Heart right ventricle (tissue), 16 donors: ENCODE measurements at regions of chr4 and their contacts with region 1.

Region 1: DNA sequence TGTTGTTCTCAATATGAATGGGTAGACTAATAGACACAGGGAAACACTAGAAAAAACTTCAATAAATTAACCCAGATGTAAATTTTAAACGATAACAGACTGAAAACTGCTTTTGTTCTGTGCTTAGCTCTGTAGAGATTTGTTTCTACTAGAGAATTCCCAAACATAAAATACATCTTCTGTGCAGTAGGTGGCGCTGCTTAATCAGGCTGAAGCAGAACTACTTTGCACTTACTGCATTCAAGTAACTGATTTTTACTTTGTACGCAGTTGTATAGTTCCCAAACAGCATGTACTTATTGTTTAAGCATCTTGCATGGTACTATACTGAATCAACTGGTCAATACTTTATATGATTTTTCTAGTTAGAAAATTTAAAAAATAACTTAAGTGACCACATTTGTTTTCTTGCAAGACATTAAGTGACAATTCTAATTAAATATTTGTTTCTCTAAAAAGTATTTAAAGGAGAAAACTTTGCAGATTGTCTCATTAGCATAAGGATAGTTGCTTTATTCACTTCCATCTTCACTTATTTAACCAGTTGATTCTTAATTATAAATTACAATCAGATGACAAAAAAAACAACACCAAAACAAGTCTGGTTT is 490.6 kb downstream of the IL15 start:
- DNase-seq: peak in 1 of 2 donors; percentile 70
- ATAC-seq: peak in 6 of 8 donors; percentile 48 to 68 (median 66)
- H3K4me3 ChIP-seq: no peak overlapping the region
- H3K27ac ChIP-seq: no peak overlapping the region
- H3K4me1 ChIP-seq: peaks cover 4 to 41% (median 14%) of the 10 kb centered on the region in 9 donors
- H3K27me3 ChIP-seq: no peaks in the 10 kb centered on the region
- CTCF ChIP-seq: peak; percentile 72 to 94 (median 86)

Region 2: GRCh38 chr4:142353149-142353738 is 226.2 kb after region 1 on chr4:
- intact Hi-C with region 1: loop called in 2 of 10 experiments (anchors 5 to 10 kb)
- DNase-seq: peak in 1 of 2 donors; percentile 26
- ATAC-seq: peak in 7 of 8 donors; percentile 36 to 69 (median 48)
- H3K4me3 ChIP-seq: no peak overlapping the region
- H3K27ac ChIP-seq: peak overlapping the region in 6 of 10 donors; percentile 21 to 68 (median 34)
- H3K4me1 ChIP-seq: peaks cover 2 to 80% (median 67%) of the 10 kb centered on the region in 9 donors
- H3K27me3 ChIP-seq: no peaks in the 10 kb centered on the region
- CTCF ChIP-seq: peak; percentile 84 to 96 (median 90)

Region 3: GRCh38 chr4:142405021-142405694 is 278.2 kb after region 1 on chr4:
- intact Hi-C with region 1: loop called in 1 of 10 experiments (anchors 10 kb)
- DNase-seq: peak; percentile 12 to 67
- ATAC-seq: peak; percentile 62 to 83 (median 76)
- H3K4me3 ChIP-seq: peak overlapping the region; percentile 13 to 65 (median 52)
- H3K27ac ChIP-seq: peak overlapping the region in 9 of 10 donors; percentile 51 to 85 (median 71)
- H3K4me1 ChIP-seq: peaks cover 0 to 57% (median 48%) of the 10 kb centered on the region in 9 donors
- H3K27me3 ChIP-seq: no peaks in the 10 kb centered on the region
- CTCF ChIP-seq: no peak

Region 4: DNA sequence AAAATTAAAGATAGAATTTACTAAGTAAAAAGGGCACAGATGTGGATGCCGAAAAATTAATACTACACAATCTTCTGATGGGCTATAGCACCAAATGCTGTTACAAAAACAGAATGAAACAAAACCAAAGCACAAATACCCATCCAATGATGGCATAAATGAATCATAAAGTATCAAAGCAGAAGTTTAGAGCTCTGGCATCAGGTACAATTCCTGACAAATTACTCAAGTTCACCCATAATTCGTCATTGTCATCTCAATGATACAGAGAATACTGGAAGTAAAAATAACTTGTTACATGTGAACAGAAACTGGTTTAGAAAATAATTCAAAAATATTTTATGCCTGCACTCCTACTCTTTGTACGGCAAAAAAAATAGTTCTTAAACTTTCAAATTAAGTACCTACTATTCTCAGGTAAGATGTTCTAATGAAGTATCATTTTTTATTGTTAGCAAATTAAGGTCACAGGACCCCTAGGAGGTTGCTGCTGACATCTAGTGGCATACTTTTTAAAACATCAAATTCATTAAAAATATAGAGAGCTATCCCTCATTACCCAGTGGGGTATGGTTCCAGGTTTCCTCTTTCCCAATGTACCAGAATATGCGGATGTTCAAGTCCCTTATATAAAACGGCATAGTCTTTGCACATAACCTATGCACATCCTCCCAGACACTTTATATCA is 593.0 kb after region 1 on chr4:
- intact Hi-C with region 1: loop called in 7 of 10 experiments (anchors 2 to 10 kb)
- DNase-seq: no peak
- ATAC-seq: no peak
- H3K4me3 ChIP-seq: no peak overlapping the region
- H3K27ac ChIP-seq: no peak overlapping the region
- H3K4me1 ChIP-seq: peaks cover 0 to 8% (median 0%) of the 10 kb centered on the region in 9 donors
- H3K27me3 ChIP-seq: no peaks in the 10 kb centered on the region
- CTCF ChIP-seq: peak; percentile 25 to 66 (median 55)

Region 5: GRCh38 chr4:142728233-142728632 is 601.2 kb after region 1 on chr4:
- intact Hi-C with region 1: loop called in 5 of 10 experiments (anchors 5 to 10 kb)
- DNase-seq: no peak
- ATAC-seq: no peak
- H3K4me3 ChIP-seq: no peak overlapping the region
- H3K27ac ChIP-seq: no peak overlapping the region
- H3K4me1 ChIP-seq: no peaks in the 10 kb centered on the region
- H3K27me3 ChIP-seq: no peaks in the 10 kb centered on the region
- CTCF ChIP-seq: no peak

Region 6: DNA sequence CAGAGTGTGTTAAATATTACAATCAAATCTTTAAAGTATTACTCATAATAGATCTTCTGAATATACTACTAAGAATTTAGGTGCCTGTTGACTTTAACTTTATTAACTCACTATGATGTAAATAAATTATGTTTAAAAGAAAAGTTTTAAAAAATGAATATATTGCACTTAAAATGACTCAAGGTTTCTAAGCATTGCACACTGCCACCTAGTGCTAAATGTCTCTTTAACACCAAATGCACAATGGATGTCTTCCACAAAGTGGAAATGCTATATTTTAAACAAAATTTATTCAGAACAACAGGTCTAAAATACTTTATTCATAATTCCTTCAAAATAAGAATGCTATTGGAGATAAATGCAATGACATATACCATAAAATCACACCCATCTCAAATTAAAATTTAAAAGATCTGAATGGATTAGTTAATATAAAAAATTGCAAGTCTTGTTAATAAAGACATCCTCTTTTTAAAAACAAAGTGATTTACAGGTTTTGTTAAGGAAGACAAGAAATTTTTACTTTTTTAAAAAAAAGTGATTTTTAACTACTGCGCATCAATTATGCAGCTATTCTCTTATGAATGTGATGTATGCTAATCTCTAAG is 713.6 kb after region 1 on chr4:
- intact Hi-C with region 1: loop called in 8 of 10 experiments (anchors 2 to 5 kb)
- DNase-seq: no peak
- ATAC-seq: no peak
- H3K4me3 ChIP-seq: no peak overlapping the region
- H3K27ac ChIP-seq: no peak overlapping the region
- H3K4me1 ChIP-seq: peaks cover 0 to 24% (median 0%) of the 10 kb centered on the region in 9 donors
- H3K27me3 ChIP-seq: peaks cover 0 to 21% (median 1%) of the 10 kb centered on the region in 7 donors
- CTCF ChIP-seq: peak; percentile 13 to 80 (median 69)

Region 7: DNA sequence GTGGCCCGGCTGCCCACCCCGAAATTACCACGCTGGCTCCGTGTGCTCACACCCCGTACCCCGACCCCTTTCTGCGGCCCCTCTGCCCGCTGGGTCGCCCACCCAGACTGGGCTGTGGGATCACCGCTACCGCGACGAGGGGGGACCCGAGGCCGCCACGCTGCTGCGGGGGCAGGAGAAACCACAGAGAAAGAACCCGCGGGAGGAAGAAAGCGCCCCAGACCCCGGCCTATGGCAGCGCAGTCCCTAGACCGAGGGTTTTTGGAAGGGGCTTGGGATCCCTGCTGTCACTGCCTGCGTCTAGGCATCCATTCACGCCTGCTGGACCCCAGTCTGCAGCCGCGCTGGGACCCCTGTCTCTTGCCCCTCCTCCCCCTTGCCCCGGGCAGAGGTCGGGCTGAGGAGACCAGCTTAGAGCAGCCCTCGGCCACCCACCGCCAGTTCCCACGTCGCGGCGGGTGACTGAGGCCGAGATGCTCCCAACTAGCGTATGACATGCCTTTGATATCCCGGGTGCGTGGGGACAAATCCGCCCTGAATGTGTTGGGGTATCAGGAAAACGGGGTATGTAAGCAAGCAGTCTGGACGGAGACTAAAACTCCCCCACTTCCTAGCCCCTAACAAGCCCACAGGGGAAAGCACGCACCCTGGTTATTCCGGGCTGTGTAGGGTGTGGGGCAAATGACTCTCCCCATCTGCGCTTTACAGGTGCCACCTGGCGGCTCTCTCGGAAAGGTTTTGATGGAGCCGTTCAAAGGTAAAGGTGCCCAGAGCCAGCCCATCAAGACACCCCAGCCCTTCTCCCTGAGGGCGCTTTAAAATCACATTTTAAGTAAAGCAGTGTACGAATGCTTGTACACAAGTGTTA is 720.0 kb after region 1 on chr4:
- intact Hi-C with region 1: loop called in 8 of 10 experiments (anchors 2 to 5 kb)
- DNase-seq: peak; percentile 33 to 45
- ATAC-seq: peak; percentile 57 to 84 (median 78)
- H3K4me3 ChIP-seq: peak overlapping the region; percentile 57 to 79 (median 66)
- H3K27ac ChIP-seq: peak overlapping the region; percentile 57 to 93 (median 82)
- H3K4me1 ChIP-seq: peaks cover 0 to 30% (median 10%) of the 10 kb centered on the region in 9 donors
- H3K27me3 ChIP-seq: peaks cover 0 to 55% (median 15%) of the 10 kb centered on the region in 7 donors
- CTCF ChIP-seq: peak in 7 of 9 donors; percentile 33 to 56 (median 50)